PC-9 (cell line): ENCODE measurements at regions of chr6 and their contacts with region 1.

Region 1: DNA sequence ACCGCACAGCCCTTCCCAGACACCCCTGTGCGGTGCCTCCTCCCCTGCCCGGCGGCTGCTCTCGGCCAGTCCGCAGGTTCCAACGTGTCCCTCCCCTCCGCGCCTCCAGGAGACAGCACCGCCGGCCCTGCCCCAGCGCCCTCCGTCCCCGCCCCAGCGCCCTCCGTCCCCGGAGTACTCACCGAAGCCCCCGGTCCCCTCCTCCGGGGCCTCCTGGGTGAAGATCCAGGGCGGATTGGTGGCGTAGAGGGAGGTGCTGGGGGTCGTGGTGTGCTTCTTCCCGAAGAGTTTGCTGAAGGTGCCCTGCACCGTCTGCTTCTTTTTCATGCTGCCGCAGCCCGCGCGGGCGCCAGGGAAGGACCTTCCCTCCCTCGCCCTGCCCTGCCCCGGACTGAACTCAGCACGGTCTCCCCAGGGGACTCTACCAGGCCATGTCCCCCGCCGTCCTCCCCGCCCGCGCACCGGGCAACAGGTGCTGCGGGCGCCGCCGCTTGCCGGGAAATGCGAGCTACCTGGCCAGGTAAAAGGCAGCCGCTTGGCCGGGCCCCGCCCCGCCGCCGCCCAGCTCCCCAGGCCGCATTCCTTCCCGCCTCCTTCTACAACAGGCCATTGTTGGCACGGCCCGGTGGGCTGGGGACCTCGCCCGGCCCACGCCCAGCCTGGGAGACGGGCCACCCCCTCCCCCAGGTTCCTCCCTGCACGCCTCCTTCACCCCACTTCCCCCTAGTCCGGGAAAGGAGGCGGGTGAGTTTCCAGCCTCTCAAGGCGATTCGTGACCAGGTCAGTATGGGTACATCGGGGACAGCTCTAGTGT is at the start of gene C6orf132:
- DNase-seq: peak; percentile 81 to 95
- H3K4me3 ChIP-seq: peak within 1 kb of the TSS; percentile 97
- H3K27ac ChIP-seq: peak within 1 kb of the TSS; percentile 95
- H3K4me1 ChIP-seq: peaks cover 50% of the 10 kb centered on the region
- H3K27me3 ChIP-seq: no peaks in the 10 kb centered on the region
- CTCF ChIP-seq: no peak; the same call in 1 of the 2 replicates
- total RNA-seq, gene C6orf132: 49.8 and 53.9 TPM in 2 replicates

Region 2: DNA sequence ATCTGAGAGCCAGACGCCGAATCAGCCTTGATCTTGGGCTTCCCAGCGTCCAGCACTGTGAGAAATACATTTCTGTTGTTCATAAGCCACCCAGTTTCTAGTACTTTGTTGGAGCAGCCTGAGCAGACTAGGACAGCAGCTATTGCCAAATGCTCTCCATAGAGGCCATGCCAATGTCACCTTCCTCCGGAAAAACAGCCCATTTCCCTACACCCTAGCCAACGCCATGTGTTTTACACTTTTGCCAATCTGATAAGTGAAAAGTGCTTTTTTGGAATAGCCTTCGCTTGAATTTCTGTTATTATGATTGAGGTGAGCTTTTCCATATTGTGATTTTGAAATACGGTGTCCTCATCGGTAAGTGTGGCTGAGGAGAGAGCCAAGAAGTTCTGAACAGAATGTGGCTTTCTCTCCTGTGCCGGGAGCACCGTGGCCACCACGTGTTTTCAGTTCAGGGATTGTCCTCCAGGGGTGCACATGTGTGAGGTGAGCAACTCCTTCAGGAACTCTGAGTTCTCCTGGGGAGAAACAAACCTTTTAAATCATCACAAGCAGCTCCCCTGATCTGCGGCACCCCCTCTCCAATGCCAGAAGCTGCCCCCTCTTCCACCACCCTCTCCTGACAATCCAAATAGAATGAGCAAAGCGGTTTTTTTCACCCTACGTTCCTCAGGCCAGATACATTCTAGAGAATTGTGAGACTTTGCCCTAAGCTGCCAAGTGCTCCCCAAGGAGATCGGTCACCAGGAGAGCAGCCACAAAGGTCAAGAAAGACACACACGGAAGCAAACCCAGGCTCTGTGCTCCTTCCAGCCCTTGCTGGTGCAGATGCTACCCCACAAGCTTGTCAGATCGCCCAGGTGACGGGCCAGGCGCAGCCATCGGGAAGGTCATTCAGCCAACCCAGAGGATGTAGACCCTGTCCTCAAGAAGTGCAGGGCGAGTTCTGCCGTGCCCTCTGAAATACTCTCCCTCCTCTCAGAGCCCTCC is 56.0 kb before region 1 on chr6:
- CTCF ChIA-PET with region 1: interaction called, 3 read pairs
- POLR2A ChIA-PET with region 1: interaction called, 16 read pairs
- intact Hi-C with region 1: loop called (anchors 2 kb)
- DNase-seq: no peak
- H3K4me3 ChIP-seq: no peak overlapping the region
- H3K27ac ChIP-seq: peak overlapping the region; percentile 78
- H3K4me1 ChIP-seq: peaks cover 31% of the 10 kb centered on the region
- H3K27me3 ChIP-seq: no peaks in the 10 kb centered on the region
- CTCF ChIP-seq: no peak; the same call in 1 of the 2 replicates

Region 3: DNA sequence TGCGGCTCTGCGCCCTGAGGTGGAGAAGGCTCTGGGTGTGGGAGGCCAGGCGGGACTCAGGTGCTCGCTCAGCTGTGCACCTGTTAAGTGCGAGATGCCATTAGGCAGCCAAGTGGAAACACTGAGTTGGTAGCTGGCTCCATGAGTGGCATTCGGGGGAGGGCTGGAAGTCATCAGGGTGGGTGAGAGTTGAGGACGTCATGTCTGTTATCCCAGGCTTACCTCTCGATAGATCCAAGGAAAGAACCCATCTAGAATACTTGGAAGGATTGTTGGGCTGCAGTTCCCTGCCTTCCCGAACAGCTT is 50.7 kb before region 1 on chr6:
- CTCF ChIA-PET with region 1: interaction called, 3 read pairs
- POLR2A ChIA-PET with region 1: interaction called, 16 read pairs
- intact Hi-C with region 1: loop called (anchors 2 kb)
- DNase-seq: peak; percentile 53 to 70
- H3K4me3 ChIP-seq: no peak overlapping the region
- H3K27ac ChIP-seq: no peak overlapping the region
- H3K4me1 ChIP-seq: peaks cover 59% of the 10 kb centered on the region
- H3K27me3 ChIP-seq: no peaks in the 10 kb centered on the region
- CTCF ChIP-seq: no peak

Region 4: GRCh38 chr6:42158011-42158410 is 15.7 kb after region 1 on chr6:
- CTCF ChIA-PET with region 1: no interaction called
- POLR2A ChIA-PET with region 1: interaction called, 5 read pairs
- intact Hi-C with region 1: loop called (anchors 2 kb)
- DNase-seq: peak in 1 of 2 experiments; percentile 46
- H3K4me3 ChIP-seq: no peak overlapping the region
- H3K27ac ChIP-seq: no peak overlapping the region
- H3K4me1 ChIP-seq: peaks cover 16% of the 10 kb centered on the region
- H3K27me3 ChIP-seq: no peaks in the 10 kb centered on the region
- CTCF ChIP-seq: no peak